ENCODE measurements at regions of chr19 and their contacts with region 1.

Region 1: DNA sequence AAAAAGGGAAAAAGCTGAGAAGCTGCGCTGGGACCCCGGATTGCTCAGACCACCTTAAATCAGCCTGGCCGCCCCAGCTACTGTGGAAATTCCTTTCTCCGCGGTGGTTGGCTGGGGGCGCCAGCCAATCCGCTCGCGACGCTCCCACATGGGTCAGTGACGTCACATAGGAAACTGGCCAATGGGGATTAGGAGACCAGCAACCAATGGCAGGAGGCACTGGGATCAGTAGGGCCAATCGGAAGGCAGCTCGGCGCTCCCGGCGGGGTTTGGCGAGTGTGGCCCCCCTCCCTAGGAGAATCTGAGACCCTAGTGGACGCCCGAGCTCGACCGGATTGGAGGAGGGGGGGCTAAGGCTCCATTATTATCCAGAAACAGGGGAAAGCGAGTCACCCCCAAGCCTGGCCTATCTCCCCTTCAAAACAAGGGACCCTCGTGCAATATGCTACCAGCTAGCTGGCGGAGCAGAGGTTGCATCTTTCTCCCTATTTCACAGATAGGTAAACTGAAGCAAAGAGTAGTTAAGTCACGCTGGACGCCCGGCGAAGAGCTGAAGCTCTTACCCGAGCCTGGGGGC is 6.5 kb upstream of the TLE2 start:
- DNase-seq: peak; percentile 97 to 99
- ATAC-seq: peak; percentile 93 to 95 (median 94)
- H3K4me3 ChIP-seq: peak overlapping the region; percentile 78
- H3K27ac ChIP-seq: peak overlapping the region; percentile 93
- H3K4me1 ChIP-seq: peaks cover 15% of the 10 kb centered on the region
- H3K27me3 ChIP-seq: no peaks in the 10 kb centered on the region
- CTCF ChIP-seq: no peak

Region 2: DNA sequence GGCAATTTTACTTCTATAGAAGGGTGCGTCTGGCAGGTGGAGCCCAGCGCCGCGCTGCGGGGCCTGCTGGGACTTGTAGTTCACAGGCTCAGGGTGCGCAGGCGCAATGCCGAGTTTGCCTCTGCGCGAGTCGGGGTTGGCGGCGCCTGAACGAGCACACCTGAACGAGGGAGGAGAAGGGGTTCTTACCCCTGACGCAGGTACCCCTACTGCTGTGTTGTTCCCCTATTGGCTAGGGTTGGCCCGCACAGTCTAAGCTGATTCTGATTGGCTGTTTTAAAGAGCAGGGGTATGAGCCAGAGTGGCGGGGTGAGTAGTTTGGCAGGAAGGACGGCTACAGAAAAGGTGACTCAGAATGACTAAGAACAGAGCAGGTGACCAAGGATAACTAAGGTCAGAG is 218.3 kb before region 1 on chr19:
- intact Hi-C with region 1: no loop called
- DNase-seq: no peak
- ATAC-seq: no peak
- H3K4me3 ChIP-seq: no peak overlapping the region
- H3K27ac ChIP-seq: no peak overlapping the region
- H3K4me1 ChIP-seq: peaks cover 5% of the 10 kb centered on the region
- H3K27me3 ChIP-seq: no peaks in the 10 kb centered on the region
- CTCF ChIP-seq: no peak

Region 3: GRCh38 chr19:2977001-2977685 is 58.5 kb before region 1 on chr19 and contains the start of gene TLE6:
- intact Hi-C with region 1: loop called (anchors 2 to 5 kb)
- DNase-seq: peak; percentile 96 to 99
- ATAC-seq: peak; percentile 97 to 99 (median 98)
- H3K4me3 ChIP-seq: peak within 1 kb of the TSS; percentile 76
- H3K27ac ChIP-seq: peak within 1 kb of the TSS; percentile 44
- H3K4me1 ChIP-seq: peaks cover 17% of the 10 kb centered on the region
- H3K27me3 ChIP-seq: no peaks in the 10 kb centered on the region
- CTCF ChIP-seq: no peak
- total RNA-seq, gene TLE6: 0.50 to 0.89 (median 0.68) TPM in 3 of 4 donors, not detected in the other

Region 4: GRCh38 chr19:3154957-3155736 is 119.5 kb after region 1 on chr19:
- intact Hi-C with region 1: no loop called
- DNase-seq: peak; percentile 79 to 80
- ATAC-seq: peak; percentile 44 to 85 (median 72)
- H3K4me3 ChIP-seq: no peak overlapping the region
- H3K27ac ChIP-seq: peak overlapping the region; percentile 58
- H3K4me1 ChIP-seq: no peaks in the 10 kb centered on the region
- H3K27me3 ChIP-seq: peaks cover 0 to 22% (median 2%) of the 10 kb centered on the region in 3 donors
- CTCF ChIP-seq: no peak

Region 5: GRCh38 chr19:3224346-3225168 is 188.9 kb after region 1 on chr19 and contains the start of gene CELF5:
- intact Hi-C with region 1: no loop called
- DNase-seq: peak in 1 of 2 donors; percentile 54
- ATAC-seq: peak in 2 of 4 donors; percentile 52 to 59
- H3K4me3 ChIP-seq: no peak within 1 kb of the TSS
- H3K27ac ChIP-seq: no peak within 1 kb of the TSS
- H3K4me1 ChIP-seq: no peaks in the 10 kb centered on the region
- H3K27me3 ChIP-seq: peaks cover 0 to 54% (median 17%) of the 10 kb centered on the region in 3 donors
- CTCF ChIP-seq: peak; percentile 59
- total RNA-seq, gene CELF5: not detected

Region 6: GRCh38 chr19:3314962-3315675 is 279.5 kb after region 1 on chr19:
- intact Hi-C with region 1: no loop called
- DNase-seq: no peak
- ATAC-seq: no peak
- H3K4me3 ChIP-seq: no peak overlapping the region
- H3K27ac ChIP-seq: no peak overlapping the region
- H3K4me1 ChIP-seq: no peaks in the 10 kb centered on the region
- H3K27me3 ChIP-seq: peaks cover 0 to 49% (median 26%) of the 10 kb centered on the region in 3 donors
- CTCF ChIP-seq: no peak

Measured in psoas muscle (tissue), 8 donors.